ENCODE measurements at regions of chr2 and their contacts with region 1.

Region 1: GRCh38 chr2:15630978-15631719 is 39.5 kb downstream of the DDX1 start:
- DNase-seq: no peak
- H3K4me3 ChIP-seq: no peak overlapping the region
- H3K27ac ChIP-seq: no peak overlapping the region
- H3K4me1 ChIP-seq: no peaks in the 10 kb centered on the region
- H3K27me3 ChIP-seq: no peaks in the 10 kb centered on the region
- CTCF ChIP-seq: no peak

Region 2: DNA sequence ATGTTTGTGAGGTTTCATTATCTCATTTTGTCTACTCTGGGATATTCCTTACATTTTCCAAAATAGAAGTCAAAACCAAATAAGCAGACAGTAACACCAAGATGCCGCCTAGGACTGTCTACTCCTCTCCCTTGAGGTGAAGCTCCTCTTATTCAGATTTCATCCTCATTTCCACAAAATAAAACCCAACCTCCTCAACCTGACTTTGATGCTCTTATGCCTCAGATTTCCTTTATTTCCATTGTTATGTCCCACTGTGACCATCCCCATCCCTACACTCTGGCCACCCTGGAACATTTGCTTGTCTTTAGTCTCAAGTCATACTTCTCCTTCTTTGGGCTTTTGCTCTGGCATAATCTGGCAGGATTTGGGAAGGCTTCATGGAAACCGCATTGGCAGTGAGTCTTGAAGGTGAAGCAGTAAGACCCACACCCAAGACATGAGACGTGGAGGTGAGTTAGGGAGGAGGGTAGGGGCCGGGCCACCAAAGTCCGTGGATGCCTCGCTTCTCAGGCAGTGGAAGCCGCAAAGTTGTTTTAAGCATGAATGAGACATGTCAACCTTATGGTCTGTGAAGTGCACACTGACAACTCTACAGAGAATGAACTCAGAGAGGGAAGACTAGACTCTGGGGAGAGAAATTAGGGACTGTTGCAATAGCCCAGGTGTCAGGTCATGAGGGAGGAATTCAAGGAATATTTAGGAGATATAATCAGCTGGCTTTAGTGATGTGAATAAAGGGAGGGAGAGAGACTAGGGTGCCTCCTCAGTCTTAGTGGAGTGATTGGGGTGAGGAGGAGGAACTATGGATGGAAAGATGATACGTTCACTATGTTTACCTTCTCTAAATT is 24.2 kb after region 1 on chr2:
- CTCF ChIA-PET with region 1: no interaction called
- POLR2A ChIA-PET with region 1: interaction called, 18 read pairs
- intact Hi-C with region 1: no loop called
- DNase-seq: no peak
- H3K4me3 ChIP-seq: no peak overlapping the region
- H3K27ac ChIP-seq: no peak overlapping the region
- H3K4me1 ChIP-seq: no peaks in the 10 kb centered on the region
- H3K27me3 ChIP-seq: peaks cover 98% of the 10 kb centered on the region
- CTCF ChIP-seq: no peak

Region 3: DNA sequence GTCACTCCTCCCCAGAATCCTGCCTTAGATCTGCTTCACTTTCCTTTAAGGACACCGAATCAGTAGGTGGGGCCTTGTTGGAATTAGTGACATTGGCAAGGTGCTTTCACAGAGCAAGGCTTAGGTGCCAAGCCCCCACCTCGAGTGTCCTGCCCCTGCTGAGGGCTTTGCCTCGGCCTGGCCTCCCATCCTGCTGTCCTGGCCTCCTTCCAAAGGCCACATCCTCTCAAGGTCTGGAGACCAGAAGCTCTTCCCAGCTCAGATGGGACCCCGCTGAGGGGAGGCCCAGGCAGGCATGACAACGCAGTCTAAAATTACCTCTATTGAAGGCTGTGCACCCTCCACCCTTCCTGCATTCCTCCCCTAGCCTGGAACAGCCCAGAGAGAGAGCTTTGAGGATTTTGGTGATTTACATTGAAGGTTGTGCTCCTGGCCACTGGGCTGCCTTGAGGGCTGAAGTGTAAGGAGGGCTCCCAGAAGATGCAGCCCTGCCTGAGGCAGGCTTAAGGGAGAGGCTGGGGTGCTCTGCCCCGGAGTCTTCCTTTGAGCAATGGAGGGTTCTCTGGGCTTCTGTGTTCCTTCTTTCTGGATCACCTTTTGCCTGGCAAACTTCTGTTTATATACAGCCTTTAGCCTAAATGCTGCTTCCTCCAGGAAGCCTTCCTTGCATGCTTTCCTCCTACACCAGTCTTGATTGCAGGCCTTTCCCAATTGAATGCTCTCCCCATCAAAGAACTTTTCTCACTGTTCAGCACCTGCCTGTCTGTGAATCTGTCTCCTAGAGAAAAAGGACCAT is 115.0 kb after region 1 on chr2:
- CTCF ChIA-PET with region 1: no interaction called
- POLR2A ChIA-PET with region 1: no interaction called
- intact Hi-C with region 1: no loop called
- DNase-seq: no peak
- H3K4me3 ChIP-seq: no peak overlapping the region
- H3K27ac ChIP-seq: no peak overlapping the region
- H3K4me1 ChIP-seq: no peaks in the 10 kb centered on the region
- H3K27me3 ChIP-seq: peaks cover 59% of the 10 kb centered on the region
- CTCF ChIP-seq: no peak

Measured in PC-9 (cell line).